Activated B cell treated with CpG ODN at 0.5 μM for 24 hours (primary cell): ENCODE measurements at regions of chr3 and their contacts with region 1.

Region 1: DNA sequence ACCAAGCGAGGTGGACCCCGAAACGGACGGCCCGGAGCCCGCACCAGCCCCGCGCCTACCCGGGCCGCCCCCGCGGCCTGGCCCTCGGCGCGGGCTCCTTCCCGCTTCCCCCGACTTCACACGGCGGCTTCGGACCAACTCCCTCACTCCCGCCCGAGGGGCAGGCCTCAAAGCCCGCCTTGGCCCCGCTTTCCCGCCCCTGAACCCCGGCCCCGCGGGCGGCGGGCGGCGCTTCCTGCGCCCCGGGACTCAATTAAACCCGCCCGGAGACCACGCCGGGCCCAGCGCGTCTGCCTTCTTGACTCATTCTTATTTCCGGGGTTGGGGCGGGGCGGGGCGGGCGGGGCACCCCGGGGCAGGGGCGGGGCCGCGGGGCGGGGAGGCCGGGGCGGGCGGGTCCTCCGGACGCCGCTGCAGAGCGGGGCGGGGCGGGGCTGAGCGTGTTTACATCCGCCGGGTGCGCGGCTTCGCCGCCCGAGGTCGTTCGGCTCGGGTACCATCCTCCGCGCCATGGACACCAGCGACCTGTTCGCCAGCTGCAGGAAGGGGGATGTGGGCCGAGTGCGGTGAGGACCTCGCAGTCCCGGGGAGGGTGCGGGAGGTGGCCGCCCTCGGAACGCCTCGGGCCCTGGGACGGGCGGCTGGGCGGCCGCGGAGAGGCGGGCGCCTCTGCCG is at the start of gene ABTB1:
- DNase-seq: peak; percentile 79
- ATAC-seq: peak; percentile 85
- H3K4me3 Mint-ChIP-seq: peak within 1 kb of the TSS; percentile 91
- H3K27ac Mint-ChIP-seq: peak within 1 kb of the TSS; percentile 93
- H3K4me1 Mint-ChIP-seq: peaks cover 20% of the 10 kb centered on the region
- H3K27me3 Mint-ChIP-seq: no peaks in the 10 kb centered on the region
- CTCF ChIP-seq: no peak
- total RNA-seq, gene ABTB1: 36.1 and 42.0 TPM in 2 replicates

Region 2: GRCh38 chr3:125916376-125916978 is 1756.2 kb before region 1 on chr3:
- CTCF ChIA-PET with region 1: no interaction called
- POLR2A ChIA-PET with region 1: no interaction called
- intact Hi-C with region 1: loop called (anchors 5 kb)
- DNase-seq: peak; percentile 91
- ATAC-seq: peak; percentile 90
- H3K4me3 Mint-ChIP-seq: peak overlapping the region; percentile 90
- H3K27ac Mint-ChIP-seq: peak overlapping the region; percentile 90
- H3K4me1 Mint-ChIP-seq: peaks cover 11% of the 10 kb centered on the region
- H3K27me3 Mint-ChIP-seq: no peaks in the 10 kb centered on the region
- CTCF ChIP-seq: no peak

Region 3: DNA sequence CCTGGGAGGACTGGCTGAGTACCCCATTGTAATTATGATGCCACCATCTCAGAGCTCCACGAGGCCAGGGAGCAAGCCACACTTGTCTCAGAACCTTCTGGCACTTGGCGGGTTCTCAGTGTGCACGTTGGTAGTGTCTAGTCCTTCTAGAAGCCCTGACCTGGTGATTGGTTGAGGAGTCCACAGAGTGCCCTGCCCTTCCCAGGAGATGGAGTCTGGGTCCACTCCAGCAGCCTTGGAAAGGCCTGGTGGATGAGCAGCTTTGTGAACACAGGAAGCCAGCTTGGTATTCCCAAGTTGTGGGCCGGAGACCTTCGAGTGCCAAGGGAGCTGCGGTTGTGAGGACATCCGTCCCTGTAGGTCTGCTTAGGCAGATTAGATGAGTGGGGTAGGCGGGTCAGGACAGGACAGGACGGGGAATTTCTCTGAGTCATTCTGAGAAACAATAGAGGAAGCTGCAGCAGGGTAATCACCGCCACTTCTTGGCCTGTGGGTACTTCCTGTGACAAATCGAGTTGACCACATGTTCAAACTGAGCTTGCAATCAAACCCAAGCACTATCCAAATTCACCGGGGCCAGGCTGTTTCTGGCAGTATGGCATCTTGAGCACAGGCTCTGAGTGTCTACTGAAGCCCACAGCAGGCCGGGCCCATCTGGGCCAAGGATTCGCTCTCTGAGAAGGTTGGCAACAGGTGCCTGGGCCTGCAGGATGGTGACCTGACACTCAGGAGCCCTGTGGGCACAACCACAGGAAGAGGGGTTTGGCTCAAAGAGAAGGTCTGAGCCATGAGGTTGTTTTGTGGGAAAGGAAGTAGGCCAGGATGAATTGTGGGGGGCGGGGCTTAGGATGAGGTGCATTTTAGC is 761.3 kb before region 1 on chr3:
- CTCF ChIA-PET with region 1: no interaction called
- POLR2A ChIA-PET with region 1: no interaction called
- intact Hi-C with region 1: loop called (anchors 2 kb)
- DNase-seq: peak; percentile 65
- ATAC-seq: peak; percentile 94
- H3K4me3 Mint-ChIP-seq: peak overlapping the region; percentile 75
- H3K27ac Mint-ChIP-seq: peak overlapping the region; percentile 95
- H3K4me1 Mint-ChIP-seq: peaks cover 44% of the 10 kb centered on the region
- H3K27me3 Mint-ChIP-seq: peaks cover 36% of the 10 kb centered on the region
- CTCF ChIP-seq: no peak

Region 4: DNA sequence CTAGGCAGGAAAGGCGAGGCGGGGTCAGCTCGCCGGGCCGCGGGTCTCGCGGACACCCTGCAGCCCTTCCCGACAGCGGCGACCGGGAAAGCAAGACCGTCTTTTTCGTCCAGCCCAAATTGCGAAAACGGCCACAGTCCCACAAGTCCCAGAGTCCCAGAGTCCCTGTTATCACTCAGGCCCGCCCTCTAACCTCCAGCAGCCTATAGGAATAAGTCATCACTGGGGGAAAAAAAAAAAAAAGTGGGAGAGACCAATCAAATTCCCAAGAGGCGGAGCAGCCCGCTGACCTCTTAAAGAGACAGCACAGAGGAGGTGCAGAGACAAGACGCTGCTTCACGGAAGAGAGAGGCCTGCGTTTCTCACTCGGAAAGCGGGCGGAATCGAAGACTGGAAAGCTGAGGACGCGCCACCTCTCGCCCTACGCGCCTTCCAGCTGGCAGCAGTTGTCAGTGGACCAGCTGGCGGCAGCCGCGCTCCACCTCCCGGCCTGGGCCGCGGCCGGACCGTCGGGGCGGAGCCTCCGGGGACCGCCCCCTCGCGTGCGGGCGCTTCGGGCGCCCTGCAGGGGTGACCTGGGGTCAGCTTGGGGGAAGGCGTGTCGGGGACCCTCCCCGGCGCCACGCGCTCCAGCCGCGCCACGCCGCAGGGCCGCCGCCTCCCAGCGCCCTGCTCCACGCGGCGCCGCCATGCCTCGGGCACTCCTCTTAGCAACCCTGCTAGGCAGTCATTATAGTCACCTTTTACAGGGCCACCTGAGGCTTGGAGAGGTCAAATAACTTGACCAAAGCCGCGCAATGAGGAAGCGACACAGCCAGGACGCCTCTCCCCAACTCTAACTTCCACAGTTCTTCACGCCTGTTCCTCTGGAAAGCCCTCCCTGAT is 81.8 kb before region 1 on chr3 and contains the start of gene TPRA1:
- CTCF ChIA-PET with region 1: no interaction called
- POLR2A ChIA-PET with region 1: no interaction called
- intact Hi-C with region 1: loop called (anchors 1 kb)
- DNase-seq: peak; percentile 79
- ATAC-seq: peak; percentile 82
- H3K4me3 Mint-ChIP-seq: peak within 1 kb of the TSS; percentile 90
- H3K27ac Mint-ChIP-seq: peak within 1 kb of the TSS; percentile 85
- H3K4me1 Mint-ChIP-seq: peaks cover 28% of the 10 kb centered on the region
- H3K27me3 Mint-ChIP-seq: no peaks in the 10 kb centered on the region
- CTCF ChIP-seq: no peak
- total RNA-seq, gene TPRA1: 17.5 and 18.3 TPM in 2 replicates

Region 5: DNA sequence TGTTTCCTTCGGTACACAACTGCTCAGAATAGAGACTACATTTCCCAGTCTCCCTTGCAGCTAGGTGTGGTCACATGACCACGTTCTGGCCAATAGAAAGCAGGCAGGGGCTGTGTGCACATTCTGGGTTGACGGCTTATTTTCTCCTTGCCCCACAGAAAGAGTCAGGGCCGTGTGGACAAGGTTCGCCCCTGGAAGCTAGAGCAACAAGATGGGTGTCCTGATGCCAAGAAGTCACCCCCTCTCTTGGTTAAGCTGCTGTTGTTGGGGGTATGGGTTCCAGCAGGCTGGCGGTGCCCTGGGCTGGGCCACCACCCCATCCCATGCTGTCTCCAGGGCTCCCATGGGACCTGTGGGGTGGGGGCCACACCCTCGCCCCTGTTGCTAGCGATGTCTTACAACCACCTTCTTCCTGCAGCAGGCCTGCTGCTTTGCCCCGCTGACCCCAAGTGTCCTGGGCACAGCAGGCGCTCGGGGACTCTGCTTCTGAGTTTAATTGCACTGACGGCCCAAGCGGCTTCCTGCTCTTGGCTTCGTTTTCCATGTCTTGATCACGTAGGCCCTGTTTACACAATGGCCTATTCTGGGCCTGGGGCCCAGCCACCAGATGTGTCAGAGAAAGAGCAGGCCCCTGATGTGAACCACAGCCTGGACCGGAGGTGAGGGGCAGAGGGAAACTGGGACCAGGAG is 25.0 kb after region 1 on chr3:
- CTCF ChIA-PET with region 1: no interaction called
- POLR2A ChIA-PET with region 1: interaction called, 8 read pairs
- intact Hi-C with region 1: loop called (anchors 1 kb)
- DNase-seq: peak; percentile 42
- ATAC-seq: peak; percentile 83
- H3K4me3 Mint-ChIP-seq: peak overlapping the region; percentile 70
- H3K27ac Mint-ChIP-seq: peak overlapping the region; percentile 57
- H3K4me1 Mint-ChIP-seq: peaks cover 24% of the 10 kb centered on the region
- H3K27me3 Mint-ChIP-seq: peaks cover 2% of the 10 kb centered on the region
- CTCF ChIP-seq: no peak

Region 6: DNA sequence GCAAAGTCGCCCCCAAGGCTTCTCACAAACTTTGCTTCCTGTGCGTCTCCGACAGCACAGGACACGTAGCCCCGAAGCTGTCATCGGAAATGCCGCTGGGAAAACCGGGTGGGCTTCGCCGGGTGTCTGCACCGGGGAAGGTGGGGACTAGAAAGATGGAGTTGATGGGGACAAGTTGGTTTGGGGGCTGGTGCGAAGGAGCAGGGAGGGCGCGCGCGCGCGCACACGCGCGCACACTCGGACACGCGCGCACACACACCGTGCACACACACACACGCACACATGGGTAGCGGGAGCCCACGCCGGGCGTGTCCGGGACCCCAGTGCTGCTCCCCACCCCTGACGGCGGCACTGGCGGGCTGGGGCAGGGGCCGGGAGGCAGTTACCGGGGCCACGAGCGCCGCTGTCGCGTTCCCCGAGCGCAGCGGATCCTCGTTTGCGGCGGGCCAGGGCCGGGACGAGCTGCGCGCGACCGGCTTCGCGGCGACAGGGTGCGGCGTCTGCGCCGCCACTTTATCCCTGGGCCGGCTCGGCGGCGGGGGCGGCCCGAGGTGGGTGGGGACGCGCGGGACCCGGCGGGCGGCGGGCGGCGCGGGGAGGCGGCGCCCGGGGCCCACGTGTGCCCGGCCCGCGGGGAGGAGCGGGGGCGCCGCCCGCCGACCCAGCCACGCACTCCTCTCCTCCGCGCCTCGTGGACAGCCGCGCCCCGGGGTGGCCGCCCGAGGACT is 150.2 kb after region 1 on chr3:
- CTCF ChIA-PET with region 1: no interaction called
- POLR2A ChIA-PET with region 1: no interaction called
- intact Hi-C with region 1: loop called (anchors 5 kb)
- DNase-seq: peak; percentile 39
- ATAC-seq: peak; percentile 72
- H3K4me3 Mint-ChIP-seq: peak overlapping the region; percentile 93
- H3K27ac Mint-ChIP-seq: peak overlapping the region; percentile 74
- H3K4me1 Mint-ChIP-seq: peaks cover 29% of the 10 kb centered on the region
- H3K27me3 Mint-ChIP-seq: peaks cover 14% of the 10 kb centered on the region
- CTCF ChIP-seq: no peak

Region 7: GRCh38 chr3:128123538-128124368 is 451.1 kb after region 1 on chr3 and contains the start of gene RUVBL1:
- CTCF ChIA-PET with region 1: no interaction called
- POLR2A ChIA-PET with region 1: interaction called, 7 read pairs
- intact Hi-C with region 1: loop called (anchors 2 kb)
- DNase-seq: peak; percentile 87
- ATAC-seq: peak; percentile 97
- H3K4me3 Mint-ChIP-seq: peak within 1 kb of the TSS; percentile 97
- H3K27ac Mint-ChIP-seq: peak within 1 kb of the TSS; percentile 93
- H3K4me1 Mint-ChIP-seq: peaks cover 23% of the 10 kb centered on the region
- H3K27me3 Mint-ChIP-seq: no peaks in the 10 kb centered on the region
- CTCF ChIP-seq: no peak
- total RNA-seq, gene RUVBL1: 44.8 and 46.6 TPM in 2 replicates